Activated CD4-positive, alpha-beta T cell treated with anti-CD3 and anti-CD28 coated beads for 36 hours (primary cell): ENCODE measurements at regions of chr10 and their contacts with region 1.

Region 1: GRCh38 chr10:90871766-90872647 is at the start of gene RPP30:
- DNase-seq: peak; percentile 92
- ATAC-seq: peak; percentile 93
- H3K4me3 Mint-ChIP-seq: peak within 1 kb of the TSS; percentile 89
- H3K27ac Mint-ChIP-seq: peak within 1 kb of the TSS; percentile 98
- H3K4me1 Mint-ChIP-seq: peaks cover 34% of the 10 kb centered on the region
- H3K27me3 Mint-ChIP-seq: peaks cover 17% of the 10 kb centered on the region
- total RNA-seq, gene RPP30: 103 to 115 TPM

Region 2: DNA sequence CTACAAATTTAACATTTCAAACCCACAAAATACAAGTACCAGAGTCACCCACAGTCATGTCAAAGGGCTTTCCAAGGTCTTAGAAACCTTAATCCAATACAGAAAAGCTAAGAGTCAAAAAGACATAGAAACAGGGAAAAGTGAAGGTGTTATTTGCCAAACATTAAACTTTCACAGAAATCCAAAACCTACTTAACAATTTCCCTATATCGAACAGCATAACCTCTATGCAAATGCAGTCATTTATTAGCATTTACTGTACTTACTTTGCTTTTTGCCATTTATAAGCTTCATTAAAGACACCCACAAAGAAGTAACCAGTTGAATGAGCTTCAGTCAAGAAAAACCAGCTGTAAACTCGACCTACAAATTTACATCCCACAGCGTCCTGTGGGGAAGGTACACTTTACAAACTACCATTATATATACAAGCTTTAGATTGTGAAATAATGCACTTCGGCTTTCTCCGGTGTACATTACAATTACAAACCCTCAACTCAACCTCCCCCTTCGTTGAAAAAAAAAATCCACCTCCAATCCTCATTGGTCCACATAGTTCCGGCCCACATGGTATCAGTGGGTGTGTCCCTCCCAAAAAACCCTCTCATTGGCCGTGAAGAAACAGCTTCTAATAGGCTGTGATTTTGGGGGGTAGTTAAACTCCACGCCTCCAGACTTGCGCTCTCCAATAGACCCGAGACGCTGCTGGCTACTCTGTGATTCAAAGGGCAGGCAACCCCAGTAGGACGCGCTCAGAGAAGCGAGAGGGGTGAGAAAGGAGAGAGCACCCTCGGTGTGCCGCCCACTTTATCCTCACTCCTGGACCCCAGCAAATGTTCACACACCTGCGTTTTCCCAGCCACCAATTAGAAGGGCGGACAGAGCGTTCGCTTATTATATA is 1228.3 kb before region 1 on chr10:
- CTCF ChIA-PET with region 1: no interaction called
- POLR2A ChIA-PET with region 1: no interaction called
- intact Hi-C with region 1: loop called in 1 of 2 experiments (anchors 10 kb)
- DNase-seq: peak; percentile 79
- ATAC-seq: peak; percentile 87
- H3K4me3 Mint-ChIP-seq: no peak overlapping the region
- H3K27ac Mint-ChIP-seq: no peak overlapping the region
- H3K4me1 Mint-ChIP-seq: peaks cover 6% of the 10 kb centered on the region
- H3K27me3 Mint-ChIP-seq: peaks cover 6% of the 10 kb centered on the region

Region 3: DNA sequence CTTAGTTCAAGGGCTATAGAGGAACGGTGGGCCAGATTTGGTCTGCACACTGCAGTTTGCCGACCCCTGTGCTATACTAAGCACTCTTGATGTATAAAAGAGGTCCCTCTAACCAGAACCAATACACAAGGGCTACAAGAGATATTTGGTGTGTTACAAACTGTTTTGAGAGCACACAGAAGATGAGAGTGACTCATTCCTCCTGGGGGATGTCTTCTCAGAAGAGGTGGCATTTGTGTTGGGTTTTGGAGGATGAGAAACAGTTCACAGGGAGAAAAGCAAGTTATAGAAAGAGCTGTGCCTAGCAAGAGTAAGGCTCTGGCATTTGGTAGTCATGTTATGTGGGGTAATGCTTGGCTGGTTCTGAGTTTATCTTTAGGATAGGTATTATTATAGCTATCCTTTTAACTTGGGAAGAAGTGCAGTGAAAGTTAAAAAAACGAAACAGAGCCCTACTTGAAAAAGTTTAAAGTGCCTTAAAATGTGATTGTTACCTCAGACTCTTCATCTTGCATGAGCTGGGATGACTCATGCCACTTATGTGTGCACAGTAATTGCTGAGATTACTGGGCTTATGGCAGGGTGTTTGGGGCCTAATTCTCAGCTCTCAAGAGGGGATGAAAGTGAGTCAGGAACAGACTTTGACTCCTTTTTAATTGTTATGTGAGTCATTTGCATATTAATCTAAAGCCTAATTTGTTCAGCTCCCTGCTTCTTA is 1010.3 kb before region 1 on chr10:
- CTCF ChIA-PET with region 1: no interaction called
- POLR2A ChIA-PET with region 1: no interaction called
- intact Hi-C with region 1: loop called in 1 of 2 experiments (anchors 2 kb)
- DNase-seq: peak; percentile 65
- ATAC-seq: peak; percentile 98
- H3K4me3 Mint-ChIP-seq: no peak overlapping the region
- H3K27ac Mint-ChIP-seq: peak overlapping the region; percentile 81
- H3K4me1 Mint-ChIP-seq: peaks cover 24% of the 10 kb centered on the region
- H3K27me3 Mint-ChIP-seq: no peaks in the 10 kb centered on the region

Region 4: DNA sequence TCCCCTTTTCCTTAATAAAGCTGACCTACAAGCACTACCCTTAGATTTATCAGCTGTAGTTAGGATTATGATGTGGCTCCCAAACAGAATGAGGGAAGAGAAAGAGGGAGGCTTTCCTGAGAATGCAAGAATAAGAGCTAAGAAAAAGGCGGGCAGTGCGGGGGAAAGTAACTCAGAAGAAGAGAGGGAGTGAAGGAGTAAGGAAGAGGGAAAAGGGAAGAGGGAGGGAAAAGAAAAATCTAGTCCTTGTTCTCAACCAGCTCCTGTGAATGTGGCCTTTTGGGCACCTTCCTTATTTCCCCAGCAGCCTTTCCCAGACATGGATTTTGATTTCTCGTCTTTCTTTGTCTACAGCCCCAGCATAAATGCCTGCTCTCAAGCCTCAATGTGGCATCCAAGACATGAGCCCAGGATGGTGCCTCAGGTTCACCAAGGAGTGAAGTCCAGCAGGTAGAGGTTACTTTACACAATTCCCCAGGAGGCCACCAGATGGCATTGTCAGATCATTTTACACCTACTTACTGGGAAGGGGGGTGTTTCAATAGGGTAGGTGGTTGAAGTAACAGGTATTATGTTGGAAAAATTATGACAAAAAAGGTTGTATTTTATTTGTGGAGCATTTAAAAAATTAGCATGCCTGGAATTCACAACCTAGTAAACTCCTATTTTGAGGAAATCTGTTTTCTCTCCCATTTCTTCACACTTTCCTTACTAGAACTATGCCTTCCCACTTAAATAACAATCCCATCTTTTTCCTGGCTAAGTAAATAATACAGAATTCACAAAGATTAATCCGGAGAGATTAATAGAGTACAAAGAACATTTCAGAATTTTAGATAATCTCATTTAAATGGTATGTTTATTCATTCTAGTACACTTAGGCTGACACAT is 120.7 kb before region 1 on chr10:
- CTCF ChIA-PET with region 1: interaction called, 5 read pairs
- POLR2A ChIA-PET with region 1: no interaction called
- intact Hi-C with region 1: loop called (anchors 1 kb)
- DNase-seq: peak; percentile 62
- ATAC-seq: peak; percentile 58
- H3K4me3 Mint-ChIP-seq: no peak overlapping the region
- H3K27ac Mint-ChIP-seq: no peak overlapping the region
- H3K4me1 Mint-ChIP-seq: no peaks in the 10 kb centered on the region
- H3K27me3 Mint-ChIP-seq: peaks cover 11% of the 10 kb centered on the region

Region 5: DNA sequence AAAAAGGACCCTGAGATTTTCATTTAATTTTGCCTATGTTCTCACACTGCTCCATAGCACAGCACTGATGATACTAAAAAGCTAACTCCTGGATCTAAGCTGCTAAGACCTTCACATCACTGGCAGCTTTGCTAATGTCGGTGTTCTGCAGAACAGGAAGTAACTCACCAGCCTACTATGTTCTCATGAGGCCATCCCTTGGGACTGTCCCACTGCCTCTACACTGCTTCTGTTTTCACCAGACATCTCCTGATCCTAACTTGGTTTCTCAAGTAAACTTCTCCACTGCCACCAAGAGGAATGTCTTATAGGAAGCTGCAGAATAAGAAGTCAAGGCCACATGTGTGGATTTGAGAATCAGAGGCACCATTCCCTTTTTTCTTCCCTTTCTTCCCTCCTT is 29.3 kb before region 1 on chr10:
- CTCF ChIA-PET with region 1: no interaction called
- POLR2A ChIA-PET with region 1: no interaction called
- intact Hi-C with region 1: no loop called
- DNase-seq: no peak
- ATAC-seq: no peak
- H3K4me3 Mint-ChIP-seq: no peak overlapping the region
- H3K27ac Mint-ChIP-seq: no peak overlapping the region
- H3K4me1 Mint-ChIP-seq: no peaks in the 10 kb centered on the region
- H3K27me3 Mint-ChIP-seq: peaks cover 32% of the 10 kb centered on the region

Region 6: GRCh38 chr10:91163269-91163868 is 291.4 kb after region 1 on chr10:
- CTCF ChIA-PET with region 1: no interaction called
- POLR2A ChIA-PET with region 1: interaction called, 5 read pairs
- intact Hi-C with region 1: loop called (anchors 2 to 10 kb)
- DNase-seq: peak; percentile 83
- ATAC-seq: peak; percentile 62
- H3K4me3 Mint-ChIP-seq: peak overlapping the region; percentile 81
- H3K27ac Mint-ChIP-seq: peak overlapping the region; percentile 91
- H3K4me1 Mint-ChIP-seq: peaks cover 34% of the 10 kb centered on the region
- H3K27me3 Mint-ChIP-seq: no peaks in the 10 kb centered on the region